ENCODE measurements at regions of chr10 and their contacts with region 1.

Region 1: DNA sequence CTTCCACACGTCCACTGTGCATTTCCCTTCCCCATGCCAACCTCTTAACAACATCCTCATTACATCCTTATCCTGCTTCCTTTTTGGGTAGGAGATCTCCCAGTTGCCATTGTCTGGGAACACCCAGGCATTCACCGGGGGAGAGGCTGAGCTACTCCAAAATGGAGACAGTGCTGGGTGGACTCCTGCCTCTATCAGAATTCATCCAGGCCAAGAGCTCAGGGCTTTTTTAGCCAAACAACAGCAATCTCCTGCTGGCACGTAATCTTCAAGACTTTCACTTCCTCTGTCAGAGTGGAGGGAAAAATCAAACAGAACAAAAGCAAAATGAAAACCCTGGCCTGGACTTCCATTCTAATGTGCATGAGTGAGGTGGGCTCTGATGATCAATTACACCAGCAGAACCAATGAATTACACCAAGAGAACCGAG is 245.0 kb downstream of the PRPF18 start:
- DNase-seq: peak in 1 of 2 donors; percentile 20
- ATAC-seq: peak; percentile 30 to 72 (median 57)
- H3K4me3 ChIP-seq: no peak overlapping the region
- H3K27ac ChIP-seq: peak overlapping the region in 9 of 10 donors; percentile 22 to 76 (median 68)
- H3K4me1 ChIP-seq: peaks cover 11 to 69% (median 45%) of the 10 kb centered on the region in 9 donors
- H3K27me3 ChIP-seq: no peaks in the 10 kb centered on the region
- CTCF ChIP-seq: no peak

Region 2: DNA sequence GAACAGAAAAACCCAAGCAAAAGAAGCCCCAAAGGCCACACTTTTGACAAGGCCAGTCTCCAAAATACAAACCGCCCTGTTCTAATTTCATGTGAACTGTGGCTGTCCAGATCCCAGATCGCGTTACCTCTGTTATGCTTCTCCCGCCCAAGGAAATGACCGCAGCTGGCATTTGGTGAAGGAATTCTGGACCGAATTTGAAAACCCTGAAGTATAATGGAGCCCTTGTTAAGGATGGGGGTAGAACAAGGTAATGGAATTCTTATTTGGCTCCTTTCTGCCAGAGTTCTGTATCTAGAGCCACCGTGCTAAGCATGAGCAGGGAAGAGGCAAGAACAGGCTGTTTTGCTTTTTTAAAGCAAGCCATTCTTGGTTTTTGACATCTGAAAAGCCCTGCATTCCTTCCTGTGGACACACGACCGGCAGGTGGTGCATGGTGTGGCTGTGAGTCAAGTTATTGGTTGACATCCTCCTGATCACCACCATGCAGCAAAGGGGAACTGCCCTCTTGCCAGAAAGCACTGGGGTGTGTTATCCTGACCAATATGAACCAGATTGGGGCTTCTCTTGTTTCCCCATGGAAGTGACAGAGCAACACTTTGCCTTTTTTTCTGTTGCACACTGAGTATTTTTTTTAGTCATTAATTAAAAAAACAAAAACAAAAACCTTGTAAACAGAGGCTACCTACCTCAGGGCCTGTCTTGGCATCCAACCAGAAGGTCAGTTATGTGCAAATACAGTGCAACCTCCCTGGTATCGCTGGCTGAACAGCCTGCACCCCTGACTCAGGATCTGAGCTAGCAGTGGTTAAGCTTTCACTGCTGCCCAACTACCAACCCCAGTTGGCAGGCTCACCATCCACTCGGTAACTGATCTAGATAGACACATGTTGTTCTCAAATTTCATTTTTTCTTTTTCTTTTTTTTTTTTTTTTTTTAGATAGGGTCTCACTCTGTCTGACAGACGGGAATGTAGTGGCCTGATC is 611.7 kb before region 1 on chr10:
- intact Hi-C with region 1: no loop called
- DNase-seq: no peak
- ATAC-seq: no peak
- H3K4me3 ChIP-seq: no peak overlapping the region
- H3K27ac ChIP-seq: no peak overlapping the region
- H3K4me1 ChIP-seq: no peaks in the 10 kb centered on the region
- H3K27me3 ChIP-seq: no peaks in the 10 kb centered on the region
- CTCF ChIP-seq: peak in 1 of 9 donors; percentile 16

Region 3: GRCh38 chr10:13586676-13587355 is 244.9 kb before region 1 on chr10 and contains the start of gene PRPF18:
- intact Hi-C with region 1: no loop called
- DNase-seq: peak; percentile 91 to 94
- ATAC-seq: peak; percentile 99 to 100 (median 99)
- H3K4me3 ChIP-seq: peak within 1 kb of the TSS; percentile 64 to 94 (median 79)
- H3K27ac ChIP-seq: peak within 1 kb of the TSS in 7 of 10 donors; percentile 49 to 79 (median 76)
- H3K4me1 ChIP-seq: peaks cover 3 to 29% (median 18%) of the 10 kb centered on the region in 9 donors
- H3K27me3 ChIP-seq: peaks cover 0 to 39% (median 16%) of the 10 kb centered on the region in 7 donors
- CTCF ChIP-seq: peak; percentile 89 to 100 (median 97)
- total RNA-seq, gene PRPF18: 13.3 to 17.1 (median 15.4) TPM

Region 4: GRCh38 chr10:13712837-13713581 is 118.7 kb before region 1 on chr10:
- intact Hi-C with region 1: no loop called
- DNase-seq: peak; percentile 67 to 80
- ATAC-seq: peak; percentile 67 to 90 (median 74)
- H3K4me3 ChIP-seq: no peak overlapping the region
- H3K27ac ChIP-seq: peak overlapping the region in 9 of 10 donors; percentile 20 to 85 (median 61)
- H3K4me1 ChIP-seq: peaks cover 9 to 71% (median 51%) of the 10 kb centered on the region in 9 donors
- H3K27me3 ChIP-seq: no peaks in the 10 kb centered on the region
- CTCF ChIP-seq: no peak

Region 5: DNA sequence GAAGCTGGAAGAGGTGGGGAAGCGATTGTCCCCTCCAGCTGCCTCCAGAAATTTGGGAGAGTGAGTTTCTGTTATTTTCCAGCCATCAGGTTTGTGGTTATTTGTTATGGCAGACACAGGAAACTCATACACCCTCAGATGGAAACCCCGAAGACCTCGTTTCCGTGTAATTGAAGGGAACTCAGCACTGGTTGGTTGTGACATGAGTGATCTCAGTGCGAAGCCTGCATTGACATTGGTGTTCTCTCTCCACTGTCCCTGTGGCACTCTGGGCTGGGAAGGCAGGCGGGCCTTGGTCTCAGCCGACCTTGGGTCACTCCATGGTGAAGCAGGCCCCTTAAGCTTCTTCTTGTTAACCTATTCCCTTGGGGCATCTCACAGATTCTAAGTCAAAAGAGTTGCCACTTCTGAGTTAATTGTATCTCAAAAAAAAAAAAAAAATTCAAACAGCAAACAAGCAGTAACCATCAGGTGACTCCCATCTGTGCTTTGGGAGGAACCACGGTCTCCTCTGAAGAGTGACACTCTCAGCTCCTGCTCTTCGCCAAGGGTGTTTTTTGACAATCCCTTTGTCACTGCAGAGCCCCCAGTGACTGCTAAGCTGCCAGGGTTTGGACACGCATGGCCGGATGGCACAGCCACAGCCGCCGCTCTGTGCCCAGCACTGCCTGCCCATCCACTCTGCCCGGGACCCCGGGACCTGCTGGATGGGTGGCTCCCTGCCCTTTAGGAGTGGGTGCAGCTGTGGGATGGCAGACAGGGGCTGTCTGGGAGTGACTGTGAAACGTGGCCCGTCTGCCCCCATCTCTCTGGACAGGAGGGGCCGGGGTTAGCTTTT is 11.4 kb before region 1 on chr10:
- intact Hi-C with region 1: loop called in 1 of 10 experiments (anchors 2 kb)
- DNase-seq: no peak
- ATAC-seq: peak in 4 of 8 donors; percentile 10 to 55 (median 12)
- H3K4me3 ChIP-seq: peak overlapping the region in 6 of 10 donors; percentile 3 to 32 (median 16)
- H3K27ac ChIP-seq: peak overlapping the region; percentile 17 to 83 (median 68)
- H3K4me1 ChIP-seq: peaks cover 0 to 59% (median 36%) of the 10 kb centered on the region in 9 donors
- H3K27me3 ChIP-seq: no peaks in the 10 kb centered on the region
- CTCF ChIP-seq: no peak

Region 6: DNA sequence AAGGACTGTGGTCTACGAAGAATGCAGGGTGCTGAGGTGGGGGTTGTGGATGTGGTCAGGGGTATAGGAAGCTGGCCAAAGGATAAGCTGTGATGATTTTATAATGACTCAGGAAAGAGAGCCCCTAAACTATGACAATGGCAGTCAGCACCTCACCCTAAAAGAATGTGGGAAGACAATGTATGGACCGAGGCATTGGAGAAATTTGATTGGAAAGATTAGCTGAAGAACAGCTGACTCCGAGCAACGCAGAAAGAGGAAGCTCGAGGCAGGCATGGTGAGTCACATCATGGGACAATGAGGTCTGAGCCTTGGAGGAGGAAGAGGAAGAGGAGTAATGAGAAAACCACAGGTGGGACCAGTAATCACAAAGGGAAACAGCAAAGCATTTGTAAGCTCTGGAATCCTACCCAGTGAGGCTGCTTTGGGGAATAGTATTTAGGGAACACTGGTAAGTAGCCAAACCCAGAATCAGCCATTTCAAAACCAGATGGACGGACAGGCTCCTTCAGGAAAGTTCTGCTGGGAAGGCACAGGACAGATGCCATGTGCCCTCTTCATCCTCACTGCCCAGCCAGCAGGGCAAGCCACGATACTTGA is 50.5 kb after region 1 on chr10:
- intact Hi-C with region 1: loop called in 1 of 10 experiments (anchors 5 kb)
- DNase-seq: peak in 1 of 2 donors; percentile 69
- ATAC-seq: peak; percentile 70 to 94 (median 82)
- H3K4me3 ChIP-seq: peak overlapping the region in 1 of 10 donors; percentile 11
- H3K27ac ChIP-seq: peak overlapping the region; percentile 56 to 92 (median 76)
- H3K4me1 ChIP-seq: peaks cover 7 to 66% (median 43%) of the 10 kb centered on the region in 9 donors
- H3K27me3 ChIP-seq: no peaks in the 10 kb centered on the region
- CTCF ChIP-seq: no peak

Region 7: DNA sequence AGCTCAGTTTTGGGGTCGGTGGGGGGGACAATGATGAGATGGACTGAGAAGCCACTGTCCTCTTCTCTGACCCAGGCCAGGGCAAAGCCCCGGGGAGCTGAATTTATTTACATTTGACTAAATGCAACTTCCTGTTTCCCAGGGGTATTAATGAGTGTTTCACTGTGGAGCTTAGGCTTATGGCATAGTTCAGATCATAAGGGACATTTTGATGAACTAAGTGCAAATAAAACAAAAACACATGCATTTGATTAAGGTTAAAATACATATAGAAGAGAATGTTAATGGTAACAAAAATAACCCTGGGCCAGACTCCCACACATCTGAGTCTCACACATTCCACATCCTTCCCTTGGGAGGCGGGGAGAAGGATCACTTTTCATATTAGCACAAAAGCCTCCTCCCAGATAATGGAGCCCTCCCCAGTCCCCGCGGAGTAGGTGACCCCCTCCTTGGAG is 178.4 kb after region 1 on chr10:
- intact Hi-C with region 1: no loop called
- DNase-seq: peak in 1 of 2 donors; percentile 47
- ATAC-seq: peak; percentile 40 to 80 (median 67)
- H3K4me3 ChIP-seq: peak overlapping the region in 8 of 10 donors; percentile 14 to 48 (median 44)
- H3K27ac ChIP-seq: peak overlapping the region in 9 of 10 donors; percentile 5 to 76 (median 52)
- H3K4me1 ChIP-seq: peaks cover 0 to 38% (median 21%) of the 10 kb centered on the region in 9 donors
- H3K27me3 ChIP-seq: peaks cover 0 to 15% (median 0%) of the 10 kb centered on the region in 7 donors
- CTCF ChIP-seq: no peak